Activated CD4-positive, alpha-beta memory T cell treated with anti-CD3 and anti-CD28 coated beads, Interleukin-2, amount 10 ng/mL, durations not matched to agents 7 days and 5 days (primary cell): ENCODE measurements at regions of chr18 and their contacts with region 1.

Region 1: DNA sequence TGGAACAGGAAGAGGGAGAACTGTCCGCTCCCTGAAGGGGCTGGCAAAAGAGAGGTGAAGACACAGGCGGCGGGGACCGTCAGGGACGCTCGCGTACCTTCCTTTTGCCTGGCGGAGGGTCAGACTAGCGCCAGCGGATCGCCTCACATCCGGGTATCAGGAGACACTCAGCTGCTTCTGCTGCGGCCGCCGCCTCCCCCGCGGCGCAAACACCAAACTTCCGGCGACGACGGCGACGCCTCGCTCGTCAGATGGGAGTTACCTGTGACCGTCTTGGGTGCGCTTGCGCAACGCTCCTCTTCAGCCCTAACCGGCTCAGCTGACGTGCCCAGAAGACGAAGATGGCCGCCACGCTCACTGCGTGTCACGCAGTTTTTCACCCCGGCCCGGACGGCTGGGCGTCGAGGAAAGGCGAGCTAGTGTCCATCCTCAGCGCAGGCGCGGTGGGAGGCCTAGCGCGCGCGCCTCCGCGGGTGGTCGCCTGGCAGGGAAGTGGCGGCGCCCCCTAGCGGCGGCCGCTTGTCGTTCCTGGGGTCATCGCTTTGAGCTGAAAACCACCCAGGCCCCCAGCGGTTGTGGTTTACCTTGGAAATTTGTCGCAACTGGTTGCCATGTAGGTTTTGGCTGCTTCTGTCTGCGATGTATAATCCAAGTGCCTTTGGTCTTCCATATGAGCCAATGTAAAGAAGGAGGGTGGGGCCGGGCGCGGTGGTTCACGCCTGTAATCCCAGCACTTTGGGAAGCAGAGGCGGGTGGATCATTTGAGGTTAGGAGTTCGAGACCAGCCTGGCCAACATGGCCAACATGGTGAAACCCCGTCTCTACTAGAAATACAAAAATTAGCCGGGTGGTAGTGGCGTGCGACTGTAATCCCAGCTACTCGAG is at the start of gene ESCO1:
- DNase-seq: peak; percentile 96
- H3K4me3 Mint-ChIP-seq: peak within 1 kb of the TSS; percentile 97
- H3K27ac Mint-ChIP-seq: peak within 1 kb of the TSS; percentile 98
- H3K4me1 Mint-ChIP-seq: peaks cover 36% of the 10 kb centered on the region
- H3K27me3 Mint-ChIP-seq: no peaks in the 10 kb centered on the region
- total RNA-seq, gene ESCO1: 22.8 to 22.9 TPM

Region 2: DNA sequence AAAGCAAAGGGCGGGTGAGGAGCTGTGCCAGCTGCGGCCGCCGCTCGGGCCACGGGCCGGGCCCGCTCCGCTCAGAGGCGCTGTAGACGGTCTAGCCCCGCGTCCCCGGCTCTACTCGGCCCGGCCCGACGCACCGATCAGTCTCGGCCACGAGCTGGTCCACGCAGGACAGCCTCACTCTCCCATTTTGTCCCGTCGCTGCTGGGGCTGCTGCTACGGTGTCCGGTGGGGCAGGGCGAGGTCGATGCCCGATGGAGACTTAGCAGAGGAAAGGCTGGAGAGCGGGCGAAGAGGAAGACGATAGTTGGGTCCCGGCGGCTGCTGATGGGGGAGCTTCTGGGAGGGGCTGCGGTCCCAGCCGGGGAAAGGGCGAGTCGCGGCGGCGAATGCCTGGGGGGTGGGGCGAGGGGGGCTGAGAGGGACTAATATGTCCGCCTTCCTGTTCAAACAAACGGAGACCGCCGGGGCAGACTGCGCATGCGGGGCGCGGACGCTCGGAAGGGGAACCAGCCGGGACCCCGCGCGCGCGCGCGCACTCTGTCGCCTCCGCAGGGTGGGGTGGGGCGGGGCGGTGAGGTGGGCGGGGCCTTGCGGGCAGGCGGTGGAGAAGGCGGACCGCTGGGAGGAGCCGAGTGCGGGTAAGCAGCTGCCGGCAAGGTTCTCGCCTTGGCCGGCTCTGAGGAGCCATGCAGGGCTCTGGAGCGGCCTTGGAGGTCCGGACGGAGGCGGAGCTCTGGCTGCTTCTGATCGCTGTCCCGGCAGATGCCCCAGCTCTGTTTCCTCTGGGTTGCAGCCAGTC is 489.2 kb before region 1 on chr18 and contains the start of gene ROCK1:
- CTCF ChIA-PET with region 1: interaction called, 5 read pairs
- POLR2A ChIA-PET with region 1: interaction called, 13 read pairs
- DNase-seq: peak; percentile 99
- H3K4me3 Mint-ChIP-seq: no peak within 1 kb of the TSS
- H3K27ac Mint-ChIP-seq: peak within 1 kb of the TSS; percentile 89
- H3K4me1 Mint-ChIP-seq: peaks cover 9% of the 10 kb centered on the region
- H3K27me3 Mint-ChIP-seq: no peaks in the 10 kb centered on the region
- total RNA-seq, gene ROCK1: 67.0 to 71.5 TPM

Region 3: GRCh38 chr18:21458310-21458709 is 142.5 kb before region 1 on chr18:
- CTCF ChIA-PET with region 1: no interaction called
- POLR2A ChIA-PET with region 1: no interaction called
- DNase-seq: no peak
- H3K4me3 Mint-ChIP-seq: no peak overlapping the region
- H3K27ac Mint-ChIP-seq: no peak overlapping the region
- H3K4me1 Mint-ChIP-seq: no peaks in the 10 kb centered on the region
- H3K27me3 Mint-ChIP-seq: peaks cover 7% of the 10 kb centered on the region

Region 4: GRCh38 chr18:21472741-21473140 is 128.0 kb before region 1 on chr18:
- CTCF ChIA-PET with region 1: no interaction called
- POLR2A ChIA-PET with region 1: no interaction called
- DNase-seq: no peak
- H3K4me3 Mint-ChIP-seq: no peak overlapping the region
- H3K27ac Mint-ChIP-seq: no peak overlapping the region
- H3K4me1 Mint-ChIP-seq: no peaks in the 10 kb centered on the region
- H3K27me3 Mint-ChIP-seq: peaks cover 13% of the 10 kb centered on the region

Region 5: GRCh38 chr18:21571772-21572171 is 29.0 kb before region 1 on chr18:
- CTCF ChIA-PET with region 1: interaction called, 11 read pairs
- POLR2A ChIA-PET with region 1: interaction called, 5 read pairs
- DNase-seq: no peak
- H3K4me3 Mint-ChIP-seq: no peak overlapping the region
- H3K27ac Mint-ChIP-seq: no peak overlapping the region
- H3K4me1 Mint-ChIP-seq: no peaks in the 10 kb centered on the region
- H3K27me3 Mint-ChIP-seq: no peaks in the 10 kb centered on the region

Region 6: DNA sequence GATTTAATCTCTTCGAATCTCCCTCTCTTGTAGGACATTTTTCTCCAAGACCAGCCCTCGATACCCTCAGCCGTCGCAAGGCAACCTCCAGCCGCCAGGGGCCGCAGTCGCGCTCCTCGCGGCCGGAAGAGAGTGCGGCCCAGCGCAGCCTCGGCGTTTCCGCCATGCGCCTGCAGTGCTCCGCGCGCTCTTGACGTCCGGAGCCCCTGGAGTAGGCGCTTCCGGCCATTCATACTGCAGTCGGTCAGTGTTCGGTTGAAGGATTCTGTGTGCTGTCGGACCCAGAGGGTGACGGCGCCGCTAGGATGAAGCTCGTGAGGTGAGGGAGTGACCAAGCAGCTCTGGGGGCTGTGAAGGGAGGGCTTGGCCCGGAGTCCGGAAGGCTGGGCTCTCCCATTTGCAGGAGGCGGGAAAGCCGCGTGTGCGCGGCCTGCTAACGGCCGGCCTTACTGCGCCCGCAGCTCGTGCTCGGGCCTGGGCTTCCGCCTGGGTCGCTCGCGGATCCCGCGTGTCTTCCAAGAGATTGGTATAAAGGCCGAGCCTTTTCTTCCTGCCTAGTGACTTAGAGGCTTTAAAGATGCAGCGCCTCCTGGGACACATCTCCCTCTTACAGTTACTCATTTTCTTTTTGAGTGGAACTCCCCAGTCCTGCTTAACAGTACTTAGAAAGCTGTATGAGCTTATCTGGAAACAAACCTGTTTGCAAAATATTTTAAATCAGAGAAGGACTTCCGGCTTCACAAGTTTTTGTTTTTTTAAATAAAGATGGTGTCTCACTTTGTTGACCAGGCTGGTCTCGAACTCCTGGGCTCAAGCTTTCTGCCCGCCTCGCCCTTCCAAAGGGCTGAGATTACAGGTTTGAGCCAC is 11.6 kb after region 1 on chr18 and contains the start of gene SNRPD1:
- CTCF ChIA-PET with region 1: interaction called, 162 read pairs
- POLR2A ChIA-PET with region 1: interaction called, 178 read pairs
- DNase-seq: peak; percentile 91
- H3K4me3 Mint-ChIP-seq: peak within 1 kb of the TSS; percentile 92
- H3K27ac Mint-ChIP-seq: peak within 1 kb of the TSS; percentile 94
- H3K4me1 Mint-ChIP-seq: peaks cover 39% of the 10 kb centered on the region
- H3K27me3 Mint-ChIP-seq: no peaks in the 10 kb centered on the region
- total RNA-seq, gene SNRPD1: 96.6 to 97.5 TPM

Region 7: GRCh38 chr18:21629089-21629832 is 28.5 kb after region 1 on chr18:
- CTCF ChIA-PET with region 1: interaction called, 24 read pairs
- POLR2A ChIA-PET with region 1: interaction called, 5 read pairs
- DNase-seq: no peak
- H3K4me3 Mint-ChIP-seq: peak overlapping the region; percentile 0
- H3K27ac Mint-ChIP-seq: peak overlapping the region; percentile 71
- H3K4me1 Mint-ChIP-seq: peaks cover 21% of the 10 kb centered on the region
- H3K27me3 Mint-ChIP-seq: no peaks in the 10 kb centered on the region

Region 8: GRCh38 chr18:21682371-21683051 is 81.7 kb after region 1 on chr18:
- CTCF ChIA-PET with region 1: interaction called, 9 read pairs
- POLR2A ChIA-PET with region 1: interaction called, 14 read pairs
- DNase-seq: peak; percentile 28
- H3K4me3 Mint-ChIP-seq: no peak overlapping the region
- H3K27ac Mint-ChIP-seq: no peak overlapping the region
- H3K4me1 Mint-ChIP-seq: peaks cover 15% of the 10 kb centered on the region
- H3K27me3 Mint-ChIP-seq: no peaks in the 10 kb centered on the region

Region 9: DNA sequence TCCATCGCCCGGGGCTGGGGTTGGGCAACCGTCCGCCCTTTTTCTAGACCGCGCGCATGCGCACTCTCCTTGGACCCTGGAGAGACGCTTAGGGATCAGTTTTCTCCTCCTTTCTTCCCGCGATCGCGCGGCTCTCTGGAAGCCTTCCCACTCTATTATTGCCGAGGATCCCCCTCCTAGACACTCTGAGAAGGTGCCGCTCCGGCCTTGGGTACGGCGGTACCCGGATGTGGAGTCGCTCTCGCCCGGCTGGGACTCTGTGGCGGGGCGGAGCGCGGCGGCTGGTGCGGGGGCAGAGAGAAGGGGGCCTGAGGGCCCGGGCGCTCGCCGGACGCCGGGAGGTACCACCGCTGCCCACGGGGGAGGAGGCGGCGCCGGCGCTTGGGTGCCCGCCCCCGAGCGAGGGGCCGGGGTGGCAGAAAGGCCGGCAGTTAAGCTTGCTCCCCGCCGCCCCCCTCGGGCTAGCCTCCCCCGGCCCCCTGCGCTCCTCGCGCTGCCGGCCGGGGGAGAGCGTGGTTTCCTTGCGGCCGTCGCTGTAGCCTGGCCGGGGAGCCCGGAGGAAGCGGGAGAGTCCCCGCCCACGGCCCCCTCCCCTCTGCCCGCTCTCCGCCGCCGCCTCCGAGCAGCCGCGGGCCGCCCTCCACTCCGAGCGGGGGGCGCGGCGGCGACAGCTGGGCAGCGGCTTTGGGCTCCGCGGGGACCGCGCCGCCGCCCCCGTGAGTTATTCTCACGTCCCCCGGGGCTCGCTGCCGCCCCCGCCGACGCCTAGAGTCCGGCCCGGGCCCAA is 140.1 kb after region 1 on chr18 and contains the start of gene MIB1:
- CTCF ChIA-PET with region 1: interaction called, 18 read pairs
- POLR2A ChIA-PET with region 1: interaction called, 41 read pairs
- DNase-seq: no peak
- H3K4me3 Mint-ChIP-seq: peak within 1 kb of the TSS; percentile 92
- H3K27ac Mint-ChIP-seq: peak within 1 kb of the TSS; percentile 93
- H3K4me1 Mint-ChIP-seq: peaks cover 53% of the 10 kb centered on the region
- H3K27me3 Mint-ChIP-seq: peaks cover 5% of the 10 kb centered on the region
- total RNA-seq, gene MIB1: 57.8 to 58.3 TPM